Mammary epithelial cell (primary cell): ENCODE measurements at regions of chr1 and their contacts with region 1.

Region 1: DNA sequence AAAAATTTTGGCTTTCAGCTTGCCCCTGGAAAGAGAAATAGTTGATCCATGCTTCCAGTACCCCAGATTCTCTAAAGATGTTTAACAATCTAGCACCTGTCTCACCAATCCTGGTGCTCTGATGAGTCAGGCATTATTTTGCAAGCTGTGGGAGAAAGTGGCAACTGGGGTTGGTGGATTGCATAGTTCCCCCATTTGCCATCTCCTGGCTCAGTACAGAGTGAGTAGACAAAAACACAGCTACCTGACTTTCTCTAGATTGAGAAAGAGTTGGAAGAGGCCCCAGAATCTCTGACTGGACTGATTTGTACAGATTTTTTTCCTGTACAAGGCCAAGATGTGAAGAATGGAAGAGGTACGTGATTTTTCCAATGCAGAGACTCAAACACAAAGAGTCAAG is 75.1 kb upstream of the NEGR1 start:
- DNase-seq: peak; percentile 92
- H3K4me3 ChIP-seq: no peak overlapping the region
- H3K27ac ChIP-seq: no peak overlapping the region
- H3K4me1 ChIP-seq: peaks cover 4% of the 10 kb centered on the region
- H3K27me3 ChIP-seq: no peaks in the 10 kb centered on the region
- CTCF ChIP-seq: no peak

Region 2: DNA sequence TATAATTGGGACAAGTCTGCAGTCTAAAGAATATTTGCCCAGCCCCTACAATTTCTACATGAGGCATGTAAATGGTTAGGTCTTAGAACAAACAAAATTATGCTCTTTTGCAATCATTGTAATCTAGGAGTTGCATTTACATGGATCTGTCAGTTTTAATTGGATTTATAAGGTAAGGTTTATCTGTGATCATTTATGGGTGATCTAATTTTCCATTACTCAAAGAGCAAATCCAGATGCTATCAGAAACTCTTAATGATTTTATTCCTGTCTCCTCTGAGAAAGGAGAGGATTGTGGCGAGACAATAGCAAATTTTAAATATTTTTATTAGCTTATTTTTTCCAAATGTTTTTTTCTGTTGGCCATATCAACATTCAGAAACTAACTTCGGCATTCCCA is 60.9 kb before region 1 on chr1:
- CTCF ChIA-PET with region 1: no interaction called
- dilution Hi-C with region 1: no loop called
- in situ Hi-C with region 1: loop called in 1 of 2 experiments (anchors 10 kb)
- intact Hi-C with region 1: no loop called
- DNase-seq: no peak
- H3K4me3 ChIP-seq: no peak overlapping the region
- H3K27ac ChIP-seq: no peak overlapping the region
- H3K4me1 ChIP-seq: no peaks in the 10 kb centered on the region
- H3K27me3 ChIP-seq: no peaks in the 10 kb centered on the region
- CTCF ChIP-seq: no peak

Region 3: GRCh38 chr1:72341661-72342060 is 15.8 kb before region 1 on chr1:
- CTCF ChIA-PET with region 1: no interaction called
- dilution Hi-C with region 1: no loop called
- in situ Hi-C with region 1: no loop called
- intact Hi-C with region 1: no loop called
- DNase-seq: peak; percentile 12
- H3K4me3 ChIP-seq: no peak overlapping the region
- H3K27ac ChIP-seq: no peak overlapping the region
- H3K4me1 ChIP-seq: no peaks in the 10 kb centered on the region
- H3K27me3 ChIP-seq: no peaks in the 10 kb centered on the region
- CTCF ChIP-seq: no peak

Region 4: GRCh38 chr1:72433591-72433990 is 76.2 kb after region 1 on chr1:
- CTCF ChIA-PET with region 1: no interaction called
- dilution Hi-C with region 1: no loop called
- in situ Hi-C with region 1: no loop called
- intact Hi-C with region 1: loop called (anchors 5 kb)
- DNase-seq: peak; percentile 22
- H3K4me3 ChIP-seq: no peak overlapping the region
- H3K27ac ChIP-seq: no peak overlapping the region
- H3K4me1 ChIP-seq: no peaks in the 10 kb centered on the region
- H3K27me3 ChIP-seq: no peaks in the 10 kb centered on the region
- CTCF ChIP-seq: no peak

Region 5: DNA sequence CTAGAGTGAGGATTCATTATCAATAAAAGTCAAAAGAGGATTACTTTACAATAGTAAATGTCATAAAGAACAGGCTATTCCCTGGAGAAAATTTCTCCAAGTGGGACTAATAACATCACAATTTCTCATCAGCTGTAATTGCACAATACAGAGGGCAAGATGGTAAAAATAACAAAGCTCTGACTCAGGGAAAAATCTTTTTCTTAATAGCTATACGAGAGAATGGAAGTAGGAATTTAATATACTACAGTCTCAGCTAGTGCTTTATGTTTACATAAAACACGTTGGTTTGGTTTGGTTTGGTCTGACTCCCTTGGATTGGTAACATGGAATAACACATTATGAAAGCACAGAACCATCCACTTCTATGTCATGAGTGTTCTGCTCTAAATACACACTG is 1443.0 kb after region 1 on chr1:
- CTCF ChIA-PET with region 1: no interaction called
- dilution Hi-C with region 1: no loop called
- in situ Hi-C with region 1: no loop called
- intact Hi-C with region 1: no loop called
- DNase-seq: peak; percentile 60
- H3K4me3 ChIP-seq: no peak overlapping the region
- H3K27ac ChIP-seq: no peak overlapping the region
- H3K4me1 ChIP-seq: peaks cover 3% of the 10 kb centered on the region
- H3K27me3 ChIP-seq: no peaks in the 10 kb centered on the region
- CTCF ChIP-seq: no peak